Posterior vena cava (tissue), 2 donors: ENCODE measurements at regions of chr1 and their contacts with region 1.

Region 1: GRCh38 chr1:111811891-111812705 is 56.4 kb downstream of the DDX20 start:
- DNase-seq: no peak

Region 2: GRCh38 chr1:111858667-111859066 is 46.6 kb after region 1 on chr1:
- intact Hi-C with region 1: loop called in 1 of 2 experiments (anchors 1 kb)
- DNase-seq: no peak

Region 3: GRCh38 chr1:112501810-112502641 is 689.9 kb after region 1 on chr1:
- intact Hi-C with region 1: no loop called
- DNase-seq: peak; percentile 92